Activated CD4-positive, alpha-beta memory T cell treated with anti-CD3 and anti-CD28 coated beads for 36 hours (primary cell): ENCODE measurements at regions of chr13 and their contacts with region 1.

Region 1: DNA sequence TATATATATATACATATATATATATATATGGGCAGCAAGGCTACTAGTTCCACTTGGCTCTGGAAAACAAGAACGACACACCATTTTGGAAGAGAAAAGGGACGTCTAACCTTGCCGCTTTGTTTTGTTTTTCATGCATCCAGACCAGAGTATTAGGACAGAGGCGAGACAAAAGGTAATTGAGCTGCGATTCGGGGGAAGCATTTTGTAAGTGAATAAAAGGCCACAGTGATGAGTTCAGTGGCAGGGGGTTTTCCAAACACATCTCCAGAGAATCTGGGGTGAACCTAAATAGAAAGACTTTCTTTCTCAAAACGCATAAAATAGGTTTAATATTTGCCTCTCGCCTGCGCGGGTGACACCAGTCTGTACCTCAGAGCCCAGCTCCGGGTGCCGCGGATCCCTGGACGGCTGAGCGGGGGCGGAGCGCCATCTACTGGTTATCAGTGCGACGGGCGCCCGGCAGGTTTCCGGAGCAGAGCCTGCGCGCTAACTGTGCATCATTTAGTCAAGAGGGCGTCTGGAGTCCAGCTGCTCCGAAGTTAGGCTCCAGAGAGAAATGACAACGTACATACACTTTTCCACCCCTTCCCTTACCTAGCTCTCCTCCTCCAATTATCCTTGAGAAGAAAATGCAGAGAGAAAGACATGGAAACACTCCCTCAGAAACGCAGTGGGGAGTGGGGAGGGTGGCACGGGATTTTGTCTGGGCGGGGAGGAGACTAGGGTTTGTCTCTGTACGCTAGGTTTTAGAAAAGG is 262.3 kb downstream of the TBC1D4 start:
- DNase-seq: peak; percentile 89
- H3K4me3 Mint-ChIP-seq: peak overlapping the region; percentile 53
- H3K27ac Mint-ChIP-seq: no peak overlapping the region
- H3K4me1 Mint-ChIP-seq: peaks cover 6% of the 10 kb centered on the region
- H3K27me3 Mint-ChIP-seq: peaks cover 21% of the 10 kb centered on the region

Region 2: GRCh38 chr13:73754727-73755292 is 1464.8 kb before region 1 on chr13:
- CTCF ChIA-PET with region 1: interaction called, 5 read pairs
- POLR2A ChIA-PET with region 1: no interaction called
- intact Hi-C with region 1: loop called (anchors 10 kb)
- DNase-seq: no peak
- H3K4me3 Mint-ChIP-seq: no peak overlapping the region
- H3K27ac Mint-ChIP-seq: no peak overlapping the region
- H3K4me1 Mint-ChIP-seq: peaks cover 30% of the 10 kb centered on the region
- H3K27me3 Mint-ChIP-seq: no peaks in the 10 kb centered on the region

Region 3: GRCh38 chr13:73835138-73835721 is 1384.4 kb before region 1 on chr13:
- CTCF ChIA-PET with region 1: interaction called, 10 read pairs
- POLR2A ChIA-PET with region 1: no interaction called
- intact Hi-C with region 1: loop called (anchors 5 kb)
- DNase-seq: no peak
- H3K4me3 Mint-ChIP-seq: no peak overlapping the region
- H3K27ac Mint-ChIP-seq: no peak overlapping the region
- H3K4me1 Mint-ChIP-seq: peaks cover 37% of the 10 kb centered on the region
- H3K27me3 Mint-ChIP-seq: no peaks in the 10 kb centered on the region

Region 4: GRCh38 chr13:75202981-75203380 is 16.7 kb before region 1 on chr13:
- CTCF ChIA-PET with region 1: interaction called, 11 read pairs
- POLR2A ChIA-PET with region 1: no interaction called
- intact Hi-C with region 1: no loop called
- DNase-seq: no peak
- H3K4me3 Mint-ChIP-seq: no peak overlapping the region
- H3K27ac Mint-ChIP-seq: no peak overlapping the region
- H3K4me1 Mint-ChIP-seq: no peaks in the 10 kb centered on the region
- H3K27me3 Mint-ChIP-seq: peaks cover 2% of the 10 kb centered on the region

Region 5: GRCh38 chr13:75357576-75358289 is 138.1 kb after region 1 on chr13:
- CTCF ChIA-PET with region 1: no interaction called
- POLR2A ChIA-PET with region 1: no interaction called
- intact Hi-C with region 1: loop called (anchors 2 kb)
- DNase-seq: peak; percentile 65
- H3K4me3 Mint-ChIP-seq: no peak overlapping the region
- H3K27ac Mint-ChIP-seq: no peak overlapping the region
- H3K4me1 Mint-ChIP-seq: peaks cover 2% of the 10 kb centered on the region
- H3K27me3 Mint-ChIP-seq: no peaks in the 10 kb centered on the region

Region 6: GRCh38 chr13:75402787-75403186 is 183.1 kb after region 1 on chr13:
- CTCF ChIA-PET with region 1: no interaction called
- POLR2A ChIA-PET with region 1: no interaction called
- intact Hi-C with region 1: no loop called
- DNase-seq: no peak
- H3K4me3 Mint-ChIP-seq: no peak overlapping the region
- H3K27ac Mint-ChIP-seq: no peak overlapping the region
- H3K4me1 Mint-ChIP-seq: no peaks in the 10 kb centered on the region
- H3K27me3 Mint-ChIP-seq: peaks cover 9% of the 10 kb centered on the region